GM12878 (cell line): ENCODE measurements at regions of chr17 and their contacts with region 1.

Region 1: GRCh38 chr17:21284319-21285163 is at the start of gene MAP2K3:
- DNase-seq: peak; percentile 88
- ATAC-seq: peak; percentile 80
- H3K4me3 ChIP-seq: peak within 1 kb of the TSS; percentile 94
- H3K27ac ChIP-seq: peak within 1 kb of the TSS; percentile 68
- H3K4me1 ChIP-seq: peaks cover 31% of the 10 kb centered on the region
- H3K27me3 ChIP-seq: 0 out of 4 replicates have a peak, but pooled peaks cover 0 to 3% of the 10 kb centered on the region in 2 experiments
- CTCF ChIP-seq: no peak
- EP300 ChIP-seq: no peak
- POLR2A ChIP-seq: peak; percentile 86
- RAD21 ChIP-seq: no peak
- polyA plus RNA-seq, gene MAP2K3: 0.71 to 3.8 TPM

Region 2: DNA sequence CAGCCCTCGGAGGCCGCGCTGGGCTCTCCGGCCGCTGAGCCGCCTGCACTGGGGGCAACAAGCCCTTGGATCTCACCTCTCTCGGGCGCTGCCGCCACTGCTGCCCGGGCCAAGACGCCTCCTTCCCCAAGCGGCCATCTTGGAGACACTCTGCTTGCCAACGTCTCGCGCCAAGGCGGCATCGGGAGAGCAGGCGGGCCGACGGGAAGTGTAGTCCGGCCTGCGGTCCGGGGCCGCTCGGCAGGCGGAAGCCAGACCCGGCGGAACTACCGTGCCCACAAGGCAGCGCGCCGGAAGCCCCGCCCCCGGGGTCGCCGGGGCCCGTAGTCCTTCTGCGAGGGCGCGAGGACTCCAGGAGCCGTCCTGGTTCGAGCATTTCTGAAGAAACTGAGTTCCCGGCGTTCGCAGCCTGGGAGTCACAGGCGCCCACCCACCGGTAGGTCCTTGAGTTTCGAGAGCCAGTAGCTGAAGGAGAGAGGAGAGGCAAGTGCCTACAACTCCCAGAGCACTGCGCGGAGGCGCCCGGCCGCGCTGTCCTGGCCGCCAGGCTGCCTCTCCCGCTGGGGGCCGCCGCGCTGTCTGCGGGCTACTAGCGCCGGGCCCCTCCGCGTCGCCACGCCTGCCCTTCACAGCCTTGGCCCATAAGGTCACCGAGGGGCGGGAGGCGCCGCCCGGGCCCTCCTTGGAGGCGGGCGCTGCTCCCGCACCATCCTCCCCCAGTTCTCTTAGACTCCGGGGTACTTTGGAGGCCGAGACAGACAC is 70.3 kb before region 1 on chr17 and contains the start of gene TMEM11:
- CTCF ChIA-PET with region 1: interaction called, 6 read pairs
- POLR2A ChIA-PET with region 1: no interaction called
- RAD21 ChIA-PET with region 1: no interaction called
- SMC1A ChIA-PET with region 1: no interaction called
- in situ Hi-C with region 1: no loop called
- intact Hi-C with region 1: loop called (anchors 5 kb)
- DNase-seq: peak; percentile 71
- ATAC-seq: peak; percentile 95
- H3K4me3 ChIP-seq: peak within 1 kb of the TSS; percentile 81
- H3K27ac ChIP-seq: peak within 1 kb of the TSS; percentile 90
- H3K4me1 ChIP-seq: peaks cover 9% of the 10 kb centered on the region; the same call in 1 of the 2 replicates
- H3K27me3 ChIP-seq: no peaks in the 10 kb centered on the region
- CTCF ChIP-seq: no peak
- EP300 ChIP-seq: no peak
- POLR2A ChIP-seq: peak; percentile 88
- RAD21 ChIP-seq: no peak
- polyA plus RNA-seq, gene TMEM11: 16.3 to 18.4 TPM

Region 3: GRCh38 chr17:21376759-21377690 is 92.5 kb after region 1 on chr17:
- CTCF ChIA-PET with region 1: interaction called, 5 read pairs
- POLR2A ChIA-PET with region 1: no interaction called
- RAD21 ChIA-PET with region 1: interaction called, 12 read pairs
- SMC1A ChIA-PET with region 1: interaction called, 3 read pairs
- in situ Hi-C with region 1: no loop called
- intact Hi-C with region 1: loop called (anchors 5 kb)
- DNase-seq: no peak
- ATAC-seq: no peak
- H3K4me3 ChIP-seq: no peak overlapping the region
- H3K27ac ChIP-seq: no peak overlapping the region
- H3K4me1 ChIP-seq: no peaks in the 10 kb centered on the region; the same call in 1 of the 2 replicates
- H3K27me3 ChIP-seq: no peaks in the 10 kb centered on the region; a peak in 2 of 4 replicates
- CTCF ChIP-seq: no peak
- EP300 ChIP-seq: no peak
- POLR2A ChIP-seq: no peak
- RAD21 ChIP-seq: no peak

Region 4: GRCh38 chr17:21511363-21512198 is 227.0 kb after region 1 on chr17:
- CTCF ChIA-PET with region 1: interaction called, 37 read pairs
- POLR2A ChIA-PET with region 1: no interaction called
- RAD21 ChIA-PET with region 1: interaction called, 13 read pairs
- SMC1A ChIA-PET with region 1: interaction called, 6 read pairs
- in situ Hi-C with region 1: loop called (anchors 10 kb)
- intact Hi-C with region 1: loop called (anchors 1 kb)
- DNase-seq: no peak
- ATAC-seq: peak; percentile 95
- H3K4me3 ChIP-seq: no peak overlapping the region
- H3K27ac ChIP-seq: no peak overlapping the region
- H3K4me1 ChIP-seq: no peaks in the 10 kb centered on the region
- H3K27me3 ChIP-seq: peaks cover 3 to 11% of the 10 kb centered on the region in 2 experiments
- CTCF ChIP-seq: peak; percentile 54 to 72 (median 59)
- EP300 ChIP-seq: no peak
- POLR2A ChIP-seq: no peak
- RAD21 ChIP-seq: peak; percentile 56